Activated B cell treated with CpG ODN at 0.5 μM for 24 hours (primary cell): ENCODE measurements at regions of chr3 and their contacts with region 1.

Region 1: DNA sequence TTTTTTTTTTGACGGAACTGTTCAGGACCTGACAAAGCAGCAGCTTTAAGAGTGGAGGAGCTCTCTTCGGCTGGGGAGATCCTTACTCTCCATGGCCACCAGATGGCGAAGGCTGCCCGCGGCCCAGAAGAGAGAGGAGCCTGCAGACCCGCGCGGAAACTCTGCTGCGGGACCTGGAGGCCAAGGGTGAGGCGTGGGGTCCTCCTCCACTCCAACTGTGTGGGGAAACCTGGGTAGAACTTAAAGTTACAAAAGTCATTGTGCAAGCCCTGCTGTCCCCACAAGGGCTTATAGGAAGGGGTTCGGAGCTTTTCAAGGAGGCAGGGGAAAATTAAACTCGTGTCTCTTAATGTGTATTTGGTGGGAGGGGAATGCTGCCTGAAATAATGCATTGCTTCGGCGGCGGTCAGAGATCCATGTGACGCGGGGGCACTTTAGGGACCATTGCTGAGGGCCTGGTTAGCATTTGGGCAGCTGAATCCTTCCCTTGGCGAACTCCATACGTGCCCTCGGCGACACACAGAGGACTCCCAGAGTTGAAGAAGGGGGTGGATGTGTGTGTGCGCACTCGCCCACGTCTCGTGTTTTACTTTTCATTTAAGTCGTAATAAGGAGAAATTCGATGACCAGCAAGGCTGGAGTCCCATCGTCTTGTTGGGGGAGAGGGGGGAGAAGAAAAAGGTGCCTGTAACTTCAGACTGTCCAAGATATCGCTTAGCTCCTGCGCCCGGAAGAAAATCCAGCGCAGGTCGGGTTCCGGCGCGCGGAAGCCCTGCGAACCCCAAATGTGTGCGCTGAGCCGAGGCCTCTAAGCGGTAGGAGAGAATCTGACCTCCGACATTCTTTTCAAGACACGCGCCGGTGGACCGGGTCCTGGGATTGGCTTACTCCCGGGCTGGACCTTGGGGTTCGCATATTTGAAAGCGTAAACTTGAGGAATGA is 9.7 kb downstream of the EOMES start:
- DNase-seq: peak; percentile 52
- ATAC-seq: peak; percentile 97
- H3K4me3 Mint-ChIP-seq: peak overlapping the region; percentile 93
- H3K27ac Mint-ChIP-seq: peak overlapping the region; percentile 26
- H3K4me1 Mint-ChIP-seq: peaks cover 33% of the 10 kb centered on the region
- H3K27me3 Mint-ChIP-seq: peaks cover 68% of the 10 kb centered on the region
- CTCF ChIP-seq: no peak

Region 2: DNA sequence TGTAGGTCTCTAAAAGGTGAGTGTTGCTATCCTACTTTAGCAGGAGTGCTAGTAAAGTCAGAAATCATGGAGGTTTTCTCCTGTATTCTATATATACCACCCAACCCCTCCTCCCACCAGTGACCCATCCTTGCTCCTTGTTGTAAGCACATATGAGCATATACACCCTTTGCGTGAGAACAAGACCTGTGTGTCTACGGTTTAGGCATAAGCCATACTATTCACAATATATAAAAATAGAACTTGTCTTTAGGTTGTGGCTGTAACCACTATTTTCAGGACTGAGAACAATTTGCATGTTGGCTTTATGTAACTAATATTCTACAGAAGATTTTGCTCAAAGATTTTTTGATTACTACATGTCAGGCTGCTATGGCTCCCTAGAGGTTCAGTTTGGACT is 1988.6 kb before region 1 on chr3:
- CTCF ChIA-PET with region 1: no interaction called
- POLR2A ChIA-PET with region 1: no interaction called
- intact Hi-C with region 1: no loop called
- DNase-seq: no peak
- ATAC-seq: no peak
- H3K4me3 Mint-ChIP-seq: no peak overlapping the region
- H3K27ac Mint-ChIP-seq: no peak overlapping the region
- H3K4me1 Mint-ChIP-seq: no peaks in the 10 kb centered on the region
- H3K27me3 Mint-ChIP-seq: no peaks in the 10 kb centered on the region
- CTCF ChIP-seq: no peak

Region 3: DNA sequence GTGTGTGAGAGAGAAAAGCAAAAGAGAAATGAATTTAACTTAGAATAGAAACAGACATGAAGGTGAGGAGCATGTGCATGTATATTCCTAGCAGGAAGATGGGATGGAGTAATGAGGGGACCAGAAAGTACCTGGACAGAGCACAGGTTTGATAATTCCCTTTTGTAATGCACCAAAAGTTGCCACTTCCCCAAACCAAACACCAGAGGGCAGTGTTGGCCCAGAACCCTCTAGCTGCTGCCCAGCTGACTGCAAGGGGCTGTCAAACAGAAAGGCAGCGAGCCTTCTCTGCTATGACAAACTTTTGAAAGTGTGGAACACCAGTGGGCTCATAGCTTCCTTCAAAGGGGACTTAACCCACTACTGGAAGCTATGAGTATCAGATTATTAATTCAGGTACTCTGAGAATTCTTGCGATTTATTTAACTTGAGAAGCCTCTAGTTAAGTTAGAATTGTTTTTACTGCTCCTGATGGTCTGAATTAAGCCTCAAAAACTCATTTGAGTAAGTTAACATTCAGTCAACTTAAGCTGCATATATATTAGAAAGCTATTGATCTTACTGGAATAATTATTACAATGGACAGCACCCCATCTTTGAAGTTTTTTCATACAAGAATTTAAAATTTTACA is 578.1 kb before region 1 on chr3:
- CTCF ChIA-PET with region 1: no interaction called
- POLR2A ChIA-PET with region 1: interaction called, 4 read pairs
- intact Hi-C with region 1: loop called (anchors 10 kb)
- DNase-seq: peak; percentile 27
- ATAC-seq: peak; percentile 71
- H3K4me3 Mint-ChIP-seq: no peak overlapping the region
- H3K27ac Mint-ChIP-seq: no peak overlapping the region
- H3K4me1 Mint-ChIP-seq: no peaks in the 10 kb centered on the region
- H3K27me3 Mint-ChIP-seq: no peaks in the 10 kb centered on the region
- CTCF ChIP-seq: peak; percentile 83

Region 4: DNA sequence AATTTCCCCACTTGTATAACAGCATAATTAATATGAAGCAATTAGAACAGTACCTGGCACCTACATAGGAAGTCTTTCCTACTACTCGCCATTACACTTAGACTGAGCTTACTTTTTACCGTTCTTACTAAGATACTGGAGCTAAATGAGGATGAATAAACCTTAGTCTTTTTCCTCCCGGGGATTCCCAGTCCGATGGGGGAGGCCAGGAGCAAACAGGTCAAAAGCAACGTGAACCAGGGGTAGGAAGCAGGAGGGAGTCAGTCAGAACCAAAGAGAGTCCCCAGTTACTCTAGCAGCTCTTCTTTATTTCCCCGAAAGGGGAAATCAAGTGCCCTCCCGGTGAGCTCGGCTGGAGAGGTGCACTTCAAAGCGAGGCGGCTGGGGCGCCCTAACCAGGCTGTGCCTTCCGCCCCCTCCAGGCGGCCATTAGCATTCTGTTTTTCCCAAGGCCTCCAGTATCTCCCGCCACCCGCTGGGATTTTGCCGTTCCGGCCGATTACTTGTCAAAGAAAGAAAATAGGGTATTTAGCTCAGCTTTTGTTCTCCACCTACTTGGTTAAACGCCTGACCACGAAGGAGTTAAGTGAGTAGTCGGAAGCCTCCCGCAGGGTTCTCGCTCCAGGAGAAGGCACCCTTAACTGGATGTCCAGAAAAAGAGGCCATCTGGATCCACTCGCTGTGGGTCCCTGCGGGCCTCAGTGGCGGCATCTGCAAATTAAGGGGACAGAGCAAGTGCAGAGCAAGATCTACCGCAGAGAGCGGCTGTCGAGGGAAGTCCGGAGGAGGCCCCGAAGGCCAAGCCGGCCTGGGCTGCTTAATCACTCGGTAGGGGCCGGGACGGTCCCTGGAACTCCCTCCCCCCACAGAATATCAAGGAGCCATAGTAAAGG is 16.0 kb after region 1 on chr3:
- CTCF ChIA-PET with region 1: interaction called, 21 read pairs
- POLR2A ChIA-PET with region 1: no interaction called
- intact Hi-C with region 1: loop called (anchors 2 kb)
- DNase-seq: no peak
- ATAC-seq: no peak
- H3K4me3 Mint-ChIP-seq: peak overlapping the region; percentile 13
- H3K27ac Mint-ChIP-seq: no peak overlapping the region
- H3K4me1 Mint-ChIP-seq: peaks cover 19% of the 10 kb centered on the region
- H3K27me3 Mint-ChIP-seq: peaks cover 76% of the 10 kb centered on the region
- CTCF ChIP-seq: no peak

Region 5: GRCh38 chr3:27985369-27986035 is 273.1 kb after region 1 on chr3:
- CTCF ChIA-PET with region 1: no interaction called
- POLR2A ChIA-PET with region 1: no interaction called
- intact Hi-C with region 1: no loop called
- DNase-seq: no peak
- ATAC-seq: no peak
- H3K4me3 Mint-ChIP-seq: no peak overlapping the region
- H3K27ac Mint-ChIP-seq: no peak overlapping the region
- H3K4me1 Mint-ChIP-seq: no peaks in the 10 kb centered on the region
- H3K27me3 Mint-ChIP-seq: no peaks in the 10 kb centered on the region
- CTCF ChIP-seq: no peak

Region 6: DNA sequence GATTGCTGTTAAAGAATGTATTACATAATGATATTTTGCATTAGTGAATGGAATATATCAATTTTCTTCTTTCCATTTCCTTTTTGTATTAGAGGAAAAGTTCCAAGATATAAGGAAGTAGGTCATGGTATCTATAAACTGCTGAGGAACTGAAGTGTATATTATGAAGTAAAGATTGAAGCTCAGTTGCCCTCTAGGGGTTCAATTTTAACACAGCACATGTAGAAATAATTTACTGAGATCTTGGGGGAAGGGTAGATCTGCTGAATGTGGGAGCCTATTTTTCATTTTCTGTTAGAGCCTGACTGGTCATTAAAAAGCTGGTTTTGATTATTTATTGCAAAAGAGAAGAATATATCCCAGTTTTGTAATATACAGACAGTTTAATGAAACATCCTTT is 574.2 kb after region 1 on chr3:
- CTCF ChIA-PET with region 1: interaction called, 7 read pairs
- POLR2A ChIA-PET with region 1: no interaction called
- intact Hi-C with region 1: loop called (anchors 2 kb)
- DNase-seq: no peak
- ATAC-seq: peak; percentile 28
- H3K4me3 Mint-ChIP-seq: no peak overlapping the region
- H3K27ac Mint-ChIP-seq: no peak overlapping the region
- H3K4me1 Mint-ChIP-seq: no peaks in the 10 kb centered on the region
- H3K27me3 Mint-ChIP-seq: no peaks in the 10 kb centered on the region
- CTCF ChIP-seq: no peak

Region 7: DNA sequence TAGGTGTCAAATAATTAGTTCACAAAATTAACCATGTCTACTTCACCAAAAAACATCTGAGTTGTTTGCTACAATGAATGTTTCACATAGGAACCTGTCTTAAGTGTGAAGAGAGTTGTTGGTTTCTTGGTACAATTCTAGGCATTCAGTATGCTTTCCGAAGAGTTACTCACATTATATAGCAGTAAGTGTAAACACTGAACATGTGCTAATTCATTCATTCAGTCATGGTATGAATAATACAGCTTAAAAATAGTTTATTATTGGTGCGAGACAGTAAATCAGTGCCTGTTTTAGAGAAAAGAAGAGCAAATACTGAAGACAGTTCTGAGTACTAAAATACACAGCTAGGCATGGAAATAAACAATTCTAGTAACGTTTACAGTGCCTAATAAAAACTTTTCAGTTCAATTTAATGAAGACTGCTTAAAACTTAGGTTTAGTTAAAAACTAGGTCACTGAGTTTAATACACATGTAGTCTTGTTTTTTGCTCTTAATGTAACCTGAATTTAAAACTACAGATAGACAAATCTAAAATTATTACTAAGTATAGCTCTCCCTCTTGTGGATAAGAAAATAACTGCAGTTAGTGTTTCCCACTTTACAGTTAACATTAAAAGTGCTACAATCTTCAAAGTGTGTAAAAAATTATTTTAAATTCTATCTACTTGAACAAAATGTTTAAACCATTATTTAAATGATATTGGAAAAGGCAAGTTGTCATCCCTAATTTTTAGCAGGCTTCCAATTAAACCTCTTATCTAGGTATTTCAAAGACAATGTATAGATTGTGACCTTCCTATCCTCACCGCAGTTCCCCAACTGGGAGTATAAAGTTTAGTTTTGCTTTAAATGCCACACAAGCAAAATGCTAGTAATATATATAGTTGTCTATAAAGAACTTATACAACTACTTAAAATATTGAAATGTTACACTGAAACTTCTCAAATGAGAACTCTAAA is 616.1 kb after region 1 on chr3:
- CTCF ChIA-PET with region 1: interaction called, 82 read pairs
- POLR2A ChIA-PET with region 1: no interaction called
- intact Hi-C with region 1: loop called (anchors 1 kb)
- DNase-seq: no peak
- ATAC-seq: peak; percentile 40
- H3K4me3 Mint-ChIP-seq: no peak overlapping the region
- H3K27ac Mint-ChIP-seq: no peak overlapping the region
- H3K4me1 Mint-ChIP-seq: no peaks in the 10 kb centered on the region
- H3K27me3 Mint-ChIP-seq: no peaks in the 10 kb centered on the region
- CTCF ChIP-seq: no peak

Region 8: GRCh38 chr3:28348629-28349483 is 636.4 kb after region 1 on chr3 and contains the starts of genes AZI2 and ZCWPW2:
- CTCF ChIA-PET with region 1: interaction called, 5 read pairs
- POLR2A ChIA-PET with region 1: interaction called, 6 read pairs
- intact Hi-C with region 1: loop called (anchors 1 kb)
- DNase-seq: peak; percentile 93
- ATAC-seq: peak; percentile 89
- H3K4me3 Mint-ChIP-seq: peak within 1 kb of the TSS; percentile 97
- H3K27ac Mint-ChIP-seq: peak within 1 kb of the TSS; percentile 97
- H3K4me1 Mint-ChIP-seq: peaks cover 43% of the 10 kb centered on the region
- H3K27me3 Mint-ChIP-seq: no peaks in the 10 kb centered on the region
- CTCF ChIP-seq: no peak
- total RNA-seq, gene AZI2: 20.8 and 21.8 TPM in 2 replicates
- total RNA-seq, gene ZCWPW2: not detected in 2 replicates